Motor neuron (in vitro differentiated cells): ENCODE measurements at regions of chr17 and their contacts with region 1.

Region 1: DNA sequence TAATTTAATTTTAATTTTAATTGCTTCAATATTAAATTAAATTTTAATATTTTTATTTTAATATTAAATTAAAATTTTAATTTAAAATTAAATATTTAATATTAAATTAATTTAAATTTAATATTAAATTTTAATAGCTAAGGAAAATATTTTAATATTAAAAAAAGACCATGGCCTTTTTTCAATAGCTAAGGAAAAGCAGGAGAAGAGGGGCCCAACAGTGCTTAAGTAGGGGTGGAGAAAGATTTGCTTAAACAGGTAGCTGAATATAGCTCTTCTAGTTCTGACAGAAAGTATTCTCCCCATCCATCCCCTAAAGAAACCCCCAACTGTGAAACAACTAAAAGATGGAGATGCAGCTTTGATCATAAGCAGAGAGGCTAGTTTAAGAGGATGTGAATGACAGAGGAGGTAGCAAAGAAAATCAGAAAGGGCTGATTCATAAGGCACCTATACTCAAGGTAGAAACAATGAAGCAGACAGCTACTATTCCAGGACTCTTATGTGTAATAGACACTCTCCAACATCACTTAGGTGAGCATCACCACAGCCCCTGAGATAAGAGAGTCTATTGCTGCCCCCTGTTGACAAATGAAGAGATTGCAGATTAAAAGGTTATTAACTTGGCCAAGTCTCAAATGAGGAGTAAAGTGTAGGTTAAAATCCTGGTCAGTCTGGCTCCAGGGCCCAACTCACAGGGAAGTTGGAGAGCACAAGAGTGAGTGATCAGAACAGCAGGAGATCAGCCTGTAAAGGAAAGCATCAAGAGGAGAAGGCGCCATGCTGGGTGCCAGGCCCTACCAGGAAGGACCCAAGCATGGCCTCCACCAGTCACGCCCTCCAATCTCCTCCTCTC is 7.8 kb upstream of the RNASEK start:
- ATAC-seq: peak; percentile 69 to 92 (median 82)
- H3K4me3 ChIP-seq: no peak overlapping the region
- H3K27ac ChIP-seq: no peak overlapping the region
- H3K4me1 ChIP-seq: no peaks in the 10 kb centered on the region

Region 2: GRCh38 chr17:6666077-6666521 is 338.5 kb before region 1 on chr17:
- in situ Hi-C with region 1: loop called in 3 of 9 experiments (anchors 10 to 25 kb)
- ATAC-seq: peak; percentile 76 to 99 (median 94)
- H3K4me3 ChIP-seq: no peak overlapping the region
- H3K27ac ChIP-seq: no peak overlapping the region
- H3K4me1 ChIP-seq: no peaks in the 10 kb centered on the region

Region 3: GRCh38 chr17:6868579-6868978 is 136.0 kb before region 1 on chr17:
- in situ Hi-C with region 1: no loop called
- ATAC-seq: no peak
- H3K4me3 ChIP-seq: no peak overlapping the region
- H3K27ac ChIP-seq: no peak overlapping the region
- H3K4me1 ChIP-seq: no peaks in the 10 kb centered on the region

Region 4: DNA sequence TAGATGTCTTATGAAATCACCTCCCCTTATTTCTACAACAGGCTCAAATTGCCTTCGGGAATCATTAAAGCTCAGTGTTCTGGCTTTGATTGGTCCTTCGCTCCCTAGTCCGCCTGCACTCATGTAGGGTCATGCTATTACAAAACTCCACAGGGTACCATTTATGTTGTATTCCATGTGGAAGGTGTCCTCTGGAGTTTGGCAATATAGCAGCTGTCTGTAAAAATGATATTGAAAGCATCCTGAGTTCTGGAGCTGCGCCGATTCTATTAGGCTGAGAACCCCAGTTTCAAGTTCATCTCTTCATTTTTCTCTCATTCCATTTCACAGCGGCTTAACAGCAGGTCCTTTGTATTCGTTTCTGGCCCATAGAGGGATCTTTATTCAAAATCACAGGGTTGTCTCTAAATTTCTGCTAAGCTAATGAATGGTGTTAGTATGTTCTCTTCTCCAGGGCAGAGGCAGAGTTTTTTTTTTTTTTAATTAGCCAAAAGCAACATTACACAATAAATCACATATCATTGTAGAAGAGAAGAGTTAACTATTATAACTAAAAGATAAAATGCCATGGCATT is 101.2 kb before region 1 on chr17:
- in situ Hi-C with region 1: loop called in 1 of 9 experiments (anchors 10 kb)
- ATAC-seq: no peak
- H3K4me3 ChIP-seq: no peak overlapping the region
- H3K27ac ChIP-seq: no peak overlapping the region
- H3K4me1 ChIP-seq: no peaks in the 10 kb centered on the region

Region 5: GRCh38 chr17:6913608-6914443 is 90.8 kb before region 1 on chr17:
- in situ Hi-C with region 1: loop called in 4 of 9 experiments (anchors 5 to 10 kb)
- ATAC-seq: peak; percentile 29 to 93 (median 48)
- H3K4me3 ChIP-seq: no peak overlapping the region
- H3K27ac ChIP-seq: no peak overlapping the region
- H3K4me1 ChIP-seq: no peaks in the 10 kb centered on the region

Region 6: GRCh38 chr17:7095625-7096024 is 91.0 kb after region 1 on chr17:
- in situ Hi-C with region 1: no loop called
- ATAC-seq: peak in 1 of 8 experiments; percentile 80
- H3K4me3 ChIP-seq: no peak overlapping the region
- H3K27ac ChIP-seq: no peak overlapping the region
- H3K4me1 ChIP-seq: no peaks in the 10 kb centered on the region

Region 7: GRCh38 chr17:7380321-7380720 is 375.7 kb after region 1 on chr17:
- in situ Hi-C with region 1: no loop called
- ATAC-seq: peak in 4 of 8 experiments; percentile 2 to 77 (median 56)
- H3K4me3 ChIP-seq: no peak overlapping the region
- H3K27ac ChIP-seq: no peak overlapping the region
- H3K4me1 ChIP-seq: peaks cover 10 to 15% of the 10 kb centered on the region in 2 donors